Psoas muscle (tissue), 8 donors: ENCODE measurements at regions of chr2 and their contacts with region 1.

Region 1: DNA sequence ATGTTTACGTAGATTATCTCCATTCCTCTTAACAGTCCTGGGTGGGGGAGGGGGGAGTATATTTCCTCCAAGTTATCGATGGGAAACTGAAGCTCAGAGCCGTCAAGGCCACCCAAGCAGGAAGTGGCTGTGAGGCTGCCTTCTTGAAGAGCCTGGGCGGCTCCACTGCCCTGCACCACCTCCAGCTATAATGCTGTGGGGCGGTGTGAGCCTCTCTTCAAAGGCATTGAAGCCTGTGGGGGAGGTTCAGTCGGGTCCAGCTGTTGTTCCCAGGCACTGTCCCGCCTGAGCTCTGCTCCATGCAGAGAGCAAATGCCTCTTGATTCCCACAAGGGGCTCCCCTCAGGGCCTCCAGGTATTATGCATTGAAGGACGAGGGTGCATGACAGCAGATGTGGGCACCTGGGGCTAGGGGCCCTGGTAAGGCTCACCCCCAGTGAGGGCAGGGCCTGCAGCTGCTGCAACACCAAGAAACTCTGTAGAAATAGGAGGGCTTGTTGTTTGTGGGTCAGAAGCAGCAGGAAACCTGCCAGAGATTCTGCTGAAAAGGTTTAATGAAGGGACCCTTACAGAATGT is 29.5 kb upstream of the LAPTM4A start:
- DNase-seq: no peak
- ATAC-seq: no peak
- H3K4me3 ChIP-seq: no peak overlapping the region
- H3K27ac ChIP-seq: no peak overlapping the region
- H3K4me1 ChIP-seq: no peaks in the 10 kb centered on the region
- H3K27me3 ChIP-seq: peaks cover 0 to 2% (median 0%) of the 10 kb centered on the region in 3 donors
- CTCF ChIP-seq: no peak

Region 2: DNA sequence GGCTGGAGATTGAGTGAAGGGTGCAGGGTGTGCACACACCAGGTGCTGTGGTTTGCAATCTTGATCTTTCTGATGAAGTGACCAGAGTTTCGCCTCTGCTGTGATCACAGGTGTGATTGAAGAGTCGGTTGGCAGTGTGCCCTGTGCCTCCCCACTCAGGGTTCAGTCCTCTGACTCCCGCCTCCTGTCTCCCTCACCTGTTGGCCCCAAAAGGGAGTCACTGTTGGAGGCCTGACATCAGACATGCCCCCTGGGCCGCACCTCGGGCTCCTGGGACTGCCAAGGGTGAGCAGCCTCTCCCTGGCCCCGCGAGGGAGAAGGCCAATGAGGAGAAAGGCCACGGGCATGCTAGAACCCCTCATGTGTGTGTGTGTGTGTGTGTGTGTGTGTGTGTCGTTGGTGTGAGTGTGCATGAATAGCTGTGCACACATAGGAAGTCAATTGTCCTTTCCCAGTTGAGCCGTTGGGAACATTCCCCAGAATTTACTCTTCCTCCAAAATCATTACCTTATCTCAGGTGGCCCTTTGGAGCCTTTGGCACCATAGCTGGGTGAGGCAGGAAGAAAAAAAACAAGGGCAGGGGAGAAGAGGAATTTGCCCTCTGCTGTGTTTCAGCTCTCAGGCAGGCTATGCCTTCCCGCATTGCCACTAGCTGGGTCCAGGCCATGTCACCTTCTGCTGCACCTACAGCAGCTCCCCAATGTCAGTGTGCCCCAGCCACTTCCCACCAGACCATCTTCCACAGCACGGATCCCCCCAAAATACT is 48.6 kb after region 1 on chr2:
- intact Hi-C with region 1: loop called in 1 of 2 experiments (anchors 2 kb)
- DNase-seq: no peak
- ATAC-seq: no peak
- H3K4me3 ChIP-seq: no peak overlapping the region
- H3K27ac ChIP-seq: no peak overlapping the region
- H3K4me1 ChIP-seq: no peaks in the 10 kb centered on the region
- H3K27me3 ChIP-seq: peaks cover 0 to 2% (median 0%) of the 10 kb centered on the region in 3 donors
- CTCF ChIP-seq: no peak